ENCODE measurements at regions of chr18 and their contacts with region 1.

Region 1: GRCh38 chr18:46281185-46282176 is 177.3 kb downstream of the HAUS1 start:
- DNase-seq: peak; percentile 50 to 88
- H3K4me3 ChIP-seq: no peak overlapping the region
- H3K27ac ChIP-seq: no peak overlapping the region
- H3K4me1 ChIP-seq: peaks cover 6 to 9% (median 7%) of the 10 kb centered on the region in 4 experiments; a peak in 6 of 7 replicates
- H3K27me3 ChIP-seq: no peaks in the 10 kb centered on the region
- CTCF ChIP-seq: peak; percentile 76 to 95 (median 94)
- EP300 ChIP-seq: no peak
- POLR2A ChIP-seq: no peak
- RAD21 ChIP-seq: peak; percentile 92 to 93

Region 2: GRCh38 chr18:45526114-45526841 is 755.2 kb before region 1 on chr18:
- CTCF ChIA-PET with region 1: no interaction called
- POLR2A ChIA-PET with region 1: no interaction called
- DNase-seq: no peak
- H3K4me3 ChIP-seq: no peak overlapping the region
- H3K27ac ChIP-seq: no peak overlapping the region
- H3K4me1 ChIP-seq: no peaks in the 10 kb centered on the region
- H3K27me3 ChIP-seq: no peaks in the 10 kb centered on the region
- CTCF ChIP-seq: no peak
- EP300 ChIP-seq: no peak
- POLR2A ChIP-seq: no peak
- RAD21 ChIP-seq: peak; percentile 19 to 44; a peak in 1 of 4 replicates

Region 3: GRCh38 chr18:46158498-46158897 is 123.0 kb before region 1 on chr18:
- CTCF ChIA-PET with region 1: interaction called, 18 read pairs
- POLR2A ChIA-PET with region 1: no interaction called
- DNase-seq: no peak
- H3K4me3 ChIP-seq: no peak overlapping the region
- H3K27ac ChIP-seq: no peak overlapping the region
- H3K4me1 ChIP-seq: peaks cover 0 to 2% (median 1%) of the 10 kb centered on the region in 4 experiments; a peak in 4 of 7 replicates
- H3K27me3 ChIP-seq: no peaks in the 10 kb centered on the region
- CTCF ChIP-seq: no peak
- EP300 ChIP-seq: no peak
- POLR2A ChIP-seq: no peak
- RAD21 ChIP-seq: no peak

Region 4: GRCh38 chr18:46324087-46324958 is 42.8 kb after region 1 on chr18:
- CTCF ChIA-PET with region 1: interaction called, 14 read pairs
- POLR2A ChIA-PET with region 1: no interaction called
- DNase-seq: no peak
- H3K4me3 ChIP-seq: no peak overlapping the region
- H3K27ac ChIP-seq: no peak overlapping the region
- H3K4me1 ChIP-seq: peaks cover 6 to 21% (median 18%) of the 10 kb centered on the region in 4 experiments
- H3K27me3 ChIP-seq: no peaks in the 10 kb centered on the region
- CTCF ChIP-seq: no peak
- EP300 ChIP-seq: no peak
- POLR2A ChIP-seq: no peak
- RAD21 ChIP-seq: no peak

Region 5: DNA sequence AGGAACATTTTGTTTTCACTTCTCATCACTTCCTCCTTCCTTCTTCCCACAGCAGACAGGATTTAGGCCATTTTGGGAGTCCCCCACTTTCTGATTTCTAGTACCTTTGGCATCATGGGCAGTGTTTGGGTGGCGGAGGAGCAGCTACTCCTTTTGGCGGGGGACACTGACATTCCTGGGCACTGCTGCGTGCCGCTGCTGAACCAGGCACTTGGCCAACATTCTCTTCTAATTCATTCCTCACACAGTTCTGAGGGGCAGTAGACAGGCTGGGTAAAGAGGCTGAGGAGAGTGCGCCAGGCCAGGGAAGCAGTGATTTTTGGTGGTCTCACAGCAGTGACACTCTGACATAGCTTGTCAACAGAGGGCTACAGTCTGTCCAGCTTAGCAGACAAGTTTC is 105.3 kb after region 1 on chr18:
- CTCF ChIA-PET with region 1: interaction called, 84 read pairs
- POLR2A ChIA-PET with region 1: no interaction called
- DNase-seq: no peak
- H3K4me3 ChIP-seq: no peak overlapping the region
- H3K27ac ChIP-seq: no peak overlapping the region
- H3K4me1 ChIP-seq: no peaks in the 10 kb centered on the region
- H3K27me3 ChIP-seq: no peaks in the 10 kb centered on the region
- CTCF ChIP-seq: no peak
- EP300 ChIP-seq: no peak
- POLR2A ChIP-seq: no peak
- RAD21 ChIP-seq: no peak

Region 6: DNA sequence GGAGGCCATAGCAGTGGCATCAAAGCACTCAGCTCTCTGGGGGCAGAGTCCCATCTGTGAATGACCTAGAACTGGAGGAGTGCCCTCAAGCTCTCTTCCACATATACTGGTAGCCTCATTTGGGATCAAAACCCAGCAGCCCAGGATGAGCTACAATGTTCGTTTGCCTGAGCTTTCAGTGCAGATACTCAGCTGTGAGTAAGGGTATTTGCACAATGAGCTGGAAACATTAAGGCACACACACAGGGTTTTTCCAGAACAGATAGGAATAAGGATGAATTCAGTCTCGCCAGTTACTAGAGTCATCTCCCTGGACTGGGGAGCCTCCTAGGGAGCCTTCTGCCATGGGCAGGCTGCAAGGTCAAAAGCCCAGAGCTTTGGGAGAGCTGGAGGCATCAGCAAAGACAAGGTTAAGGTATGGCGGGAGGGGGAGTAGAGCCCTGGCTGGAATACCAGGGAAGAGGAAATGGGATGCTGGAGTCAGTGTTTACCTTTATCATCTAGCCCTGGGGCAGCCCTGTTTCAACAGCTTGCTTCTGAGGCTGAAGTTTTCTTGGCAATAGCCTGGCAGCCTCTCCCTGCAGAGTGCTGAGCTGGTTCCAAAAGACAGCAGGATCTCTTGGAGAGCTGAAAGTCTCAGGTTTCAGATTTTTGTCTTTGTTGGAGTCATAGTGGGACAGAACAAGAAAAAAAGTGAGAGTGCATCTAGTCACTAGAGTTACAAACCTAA is 187.9 kb after region 1 on chr18:
- CTCF ChIA-PET with region 1: interaction called, 30 read pairs
- POLR2A ChIA-PET with region 1: interaction called, 3 read pairs
- DNase-seq: no peak
- H3K4me3 ChIP-seq: no peak overlapping the region
- H3K27ac ChIP-seq: no peak overlapping the region
- H3K4me1 ChIP-seq: peaks cover 5 to 11% (median 6%) of the 10 kb centered on the region in 4 experiments; a peak in 4 of 7 replicates
- H3K27me3 ChIP-seq: peaks cover 0 to 1% (median 0%) of the 10 kb centered on the region in 4 experiments; a peak in 1 of 7 replicates
- CTCF ChIP-seq: no peak
- EP300 ChIP-seq: no peak
- POLR2A ChIP-seq: no peak
- RAD21 ChIP-seq: no peak

Region 7: DNA sequence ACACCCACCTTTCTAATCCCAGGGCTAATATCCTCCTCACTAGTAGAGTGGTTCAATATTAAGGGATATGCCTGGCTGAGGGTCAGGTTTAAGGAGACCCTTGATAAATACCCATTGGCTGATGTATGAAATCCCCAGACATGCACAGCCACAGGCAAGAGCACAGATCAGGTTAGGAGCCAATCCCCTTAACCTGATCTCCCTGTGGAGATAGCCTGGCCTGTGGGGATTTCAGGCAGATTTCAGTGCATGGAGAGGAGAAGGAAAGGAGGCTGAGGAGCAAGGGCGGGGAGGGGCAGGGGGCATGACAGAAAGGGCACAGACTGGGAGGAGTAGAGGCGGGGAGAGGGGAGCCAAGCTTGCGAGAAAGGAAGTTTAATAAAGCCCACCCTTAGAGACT is 246.6 kb after region 1 on chr18:
- CTCF ChIA-PET with region 1: interaction called, 22 read pairs
- POLR2A ChIA-PET with region 1: no interaction called
- DNase-seq: no peak
- H3K4me3 ChIP-seq: no peak overlapping the region
- H3K27ac ChIP-seq: no peak overlapping the region
- H3K4me1 ChIP-seq: no peaks in the 10 kb centered on the region; a peak in 1 of 7 replicates
- H3K27me3 ChIP-seq: no peaks in the 10 kb centered on the region
- CTCF ChIP-seq: no peak
- EP300 ChIP-seq: no peak
- POLR2A ChIP-seq: no peak
- RAD21 ChIP-seq: no peak